GM18951 (cell line): ENCODE measurements at regions of chr3 and their contacts with region 1.

Region 1: DNA sequence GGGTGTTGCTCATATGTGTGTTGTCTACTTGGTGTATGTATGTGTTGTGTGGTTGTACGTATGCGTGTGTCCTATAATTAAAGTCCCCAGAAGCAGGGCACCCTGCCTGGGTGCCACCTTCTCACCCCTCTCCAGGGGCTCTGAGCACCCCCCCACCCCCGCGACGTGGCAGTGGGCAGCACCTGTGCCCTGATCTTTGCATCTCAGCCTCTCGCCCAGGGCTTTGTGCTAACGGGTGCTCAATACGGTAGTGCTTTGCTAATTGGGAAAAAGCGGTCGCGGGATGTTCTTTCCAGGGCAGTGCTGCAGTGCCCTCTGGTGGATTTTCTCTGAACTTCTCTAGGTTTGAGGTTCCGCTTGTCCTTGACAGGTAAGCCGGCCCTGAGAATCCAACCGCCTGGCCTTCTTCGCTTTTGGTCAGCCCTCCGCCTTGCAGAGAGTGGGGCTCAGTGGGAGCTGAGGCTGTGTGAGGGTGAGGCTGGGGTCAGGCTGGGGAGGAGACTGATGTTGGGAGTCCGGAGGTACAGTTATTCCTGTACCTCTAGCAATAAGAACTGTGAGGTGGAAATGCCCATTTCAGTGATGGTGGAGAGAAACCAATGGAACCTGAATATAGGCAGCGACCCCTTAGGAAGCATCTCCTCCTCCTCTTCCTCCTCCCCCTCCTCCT is 17.6 kb upstream of the EPHB3 start:
- POLR2A ChIP-seq: no peak

Region 2: GRCh38 chr3:183924956-183925355 is 619.0 kb before region 1 on chr3:
- in situ Hi-C with region 1: loop called (anchors 25 kb)
- POLR2A ChIP-seq: no peak

Region 3: DNA sequence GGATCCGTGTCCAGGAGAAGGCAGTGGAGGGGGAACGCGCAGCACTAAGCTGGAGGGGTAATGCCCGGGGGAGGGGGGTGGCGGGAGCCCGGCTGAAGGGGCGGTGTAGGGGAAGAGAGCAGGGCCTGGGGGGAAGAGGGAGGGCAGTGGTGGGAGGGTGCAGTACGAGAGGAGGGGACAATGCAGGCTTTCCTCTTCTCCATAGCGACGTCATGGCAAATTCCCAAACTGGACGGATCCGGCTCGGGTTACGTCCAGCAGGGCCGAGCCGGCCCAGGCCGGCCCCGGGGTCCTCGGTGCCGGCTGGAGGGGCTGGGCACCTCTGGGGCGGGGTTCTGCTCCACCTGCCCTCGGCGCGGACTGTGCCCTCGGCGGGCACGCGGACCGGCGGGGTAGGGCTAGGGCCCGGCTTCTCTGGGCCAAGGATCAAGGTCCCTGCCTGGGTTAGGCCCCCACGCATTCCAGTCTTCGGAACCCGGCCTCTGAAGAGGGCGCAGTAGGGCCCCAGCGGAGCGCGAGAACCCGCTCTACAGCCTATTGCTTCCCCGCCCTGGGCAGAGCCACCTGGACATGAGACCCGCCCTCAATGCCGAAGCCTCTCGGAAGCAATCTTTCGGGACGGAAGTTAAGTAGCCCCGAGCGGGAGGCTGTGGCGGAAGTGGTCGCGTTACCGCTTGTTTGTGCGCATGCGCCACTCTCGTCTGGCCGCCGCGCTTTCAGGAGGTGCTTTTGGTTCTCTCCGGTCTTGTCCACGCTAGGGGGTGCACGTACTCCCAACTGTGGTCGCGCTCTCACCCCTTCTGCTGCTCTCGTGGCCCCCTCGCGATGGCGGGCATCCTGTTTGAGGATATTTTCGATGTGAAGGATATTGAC is 181.1 kb before region 1 on chr3:
- in situ Hi-C with region 1: loop called (anchors 25 kb)
- POLR2A ChIP-seq: peak; percentile 80